ENCODE measurements at regions of chr3 and their contacts with region 1.

Region 1: GRCh38 chr3:47420511-47421484 is 40.0 kb downstream of the PTPN23 start:
- DNase-seq: peak; percentile 85 to 95 (median 92)
- ATAC-seq: peak; percentile 70 to 78
- H3K4me3 ChIP-seq: no peak overlapping the region
- H3K27ac ChIP-seq: peak overlapping the region; percentile 38
- H3K4me1 ChIP-seq: peaks cover 6% of the 10 kb centered on the region
- H3K27me3 ChIP-seq: no peaks in the 10 kb centered on the region

Region 2: GRCh38 chr3:47469616-47470015 is 48.8 kb after region 1 on chr3:
- intact Hi-C with region 1: loop called in 2 of 4 experiments (anchors 2 to 5 kb)
- DNase-seq: no peak
- ATAC-seq: no peak
- H3K4me3 ChIP-seq: no peak overlapping the region
- H3K27ac ChIP-seq: no peak overlapping the region
- H3K4me1 ChIP-seq: no peaks in the 10 kb centered on the region
- H3K27me3 ChIP-seq: no peaks in the 10 kb centered on the region

Region 3: GRCh38 chr3:47475570-47476329 is 55.0 kb after region 1 on chr3 and contains the start of gene SCAP:
- intact Hi-C with region 1: loop called in 3 of 4 experiments (anchors 2 to 5 kb)
- DNase-seq: peak; percentile 93 to 98 (median 97)
- ATAC-seq: peak; percentile 98
- H3K4me3 ChIP-seq: peak within 1 kb of the TSS; percentile 86
- H3K27ac ChIP-seq: peak within 1 kb of the TSS; percentile 57
- H3K4me1 ChIP-seq: no peaks in the 10 kb centered on the region
- H3K27me3 ChIP-seq: no peaks in the 10 kb centered on the region
- total RNA-seq, gene SCAP: 38.4 to 46.6 (median 44.0) TPM

Region 4: DNA sequence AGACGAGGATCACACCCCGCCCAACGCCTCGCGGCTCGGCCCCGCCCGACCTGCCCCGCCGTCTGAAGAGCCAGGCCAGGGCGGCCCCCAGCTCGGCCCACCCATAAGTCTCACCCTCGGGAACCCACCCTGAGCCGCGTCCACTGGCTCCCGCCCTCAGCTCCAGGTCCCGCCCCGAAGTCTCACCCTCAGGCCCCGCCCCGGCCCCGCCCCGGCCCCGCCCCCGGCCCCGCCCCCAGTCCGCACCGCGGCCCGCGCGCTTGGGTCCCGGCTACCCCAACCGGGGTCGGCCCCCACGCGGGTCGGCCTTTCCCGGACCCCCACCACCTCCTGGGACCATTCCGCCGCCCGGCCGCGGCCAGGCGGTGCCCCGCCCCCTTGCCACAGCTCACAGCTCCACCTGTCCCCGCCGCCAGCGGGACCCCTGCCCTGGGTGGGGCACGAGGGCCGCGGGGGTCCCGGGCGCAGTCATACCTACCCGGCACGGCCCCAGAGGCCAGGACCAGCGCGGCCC is 157.4 kb after region 1 on chr3:
- intact Hi-C with region 1: no loop called
- DNase-seq: peak; percentile 43 to 76 (median 73)
- ATAC-seq: peak; percentile 77 to 81
- H3K4me3 ChIP-seq: peak overlapping the region; percentile 90
- H3K27ac ChIP-seq: no peak overlapping the region
- H3K4me1 ChIP-seq: no peaks in the 10 kb centered on the region
- H3K27me3 ChIP-seq: no peaks in the 10 kb centered on the region